ENCODE measurements at regions of chr3 and their contacts with region 1.

Region 1: GRCh38 chr3:197749601-197750395 is at the start of gene FYTTD1:
- DNase-seq: peak; percentile 85
- H3K4me3 Mint-ChIP-seq: peak within 1 kb of the TSS; percentile 97
- H3K27ac Mint-ChIP-seq: peak within 1 kb of the TSS; percentile 95
- H3K4me1 Mint-ChIP-seq: peaks cover 44% of the 10 kb centered on the region
- H3K27me3 Mint-ChIP-seq: peaks cover 13% of the 10 kb centered on the region
- total RNA-seq, gene FYTTD1: 59.0 and 77.2 TPM in 2 replicates

Region 2: GRCh38 chr3:197711973-197712707 is 37.7 kb before region 1 on chr3:
- intact Hi-C with region 1: loop called (anchors 1 kb)
- DNase-seq: peak; percentile 78
- H3K4me3 Mint-ChIP-seq: peak overlapping the region; percentile 70
- H3K27ac Mint-ChIP-seq: peak overlapping the region; percentile 92
- H3K4me1 Mint-ChIP-seq: peaks cover 32% of the 10 kb centered on the region
- H3K27me3 Mint-ChIP-seq: no peaks in the 10 kb centered on the region

Region 3: GRCh38 chr3:197722734-197723133 is 27.1 kb before region 1 on chr3:
- intact Hi-C with region 1: no loop called
- DNase-seq: no peak
- H3K4me3 Mint-ChIP-seq: no peak overlapping the region
- H3K27ac Mint-ChIP-seq: no peak overlapping the region
- H3K4me1 Mint-ChIP-seq: no peaks in the 10 kb centered on the region
- H3K27me3 Mint-ChIP-seq: no peaks in the 10 kb centered on the region

Region 4: GRCh38 chr3:197801891-197802778 is 52.3 kb after region 1 on chr3:
- intact Hi-C with region 1: loop called (anchors 1 kb)
- DNase-seq: no peak
- H3K4me3 Mint-ChIP-seq: no peak overlapping the region
- H3K27ac Mint-ChIP-seq: peak overlapping the region; percentile 42
- H3K4me1 Mint-ChIP-seq: peaks cover 39% of the 10 kb centered on the region
- H3K27me3 Mint-ChIP-seq: no peaks in the 10 kb centered on the region

Region 5: DNA sequence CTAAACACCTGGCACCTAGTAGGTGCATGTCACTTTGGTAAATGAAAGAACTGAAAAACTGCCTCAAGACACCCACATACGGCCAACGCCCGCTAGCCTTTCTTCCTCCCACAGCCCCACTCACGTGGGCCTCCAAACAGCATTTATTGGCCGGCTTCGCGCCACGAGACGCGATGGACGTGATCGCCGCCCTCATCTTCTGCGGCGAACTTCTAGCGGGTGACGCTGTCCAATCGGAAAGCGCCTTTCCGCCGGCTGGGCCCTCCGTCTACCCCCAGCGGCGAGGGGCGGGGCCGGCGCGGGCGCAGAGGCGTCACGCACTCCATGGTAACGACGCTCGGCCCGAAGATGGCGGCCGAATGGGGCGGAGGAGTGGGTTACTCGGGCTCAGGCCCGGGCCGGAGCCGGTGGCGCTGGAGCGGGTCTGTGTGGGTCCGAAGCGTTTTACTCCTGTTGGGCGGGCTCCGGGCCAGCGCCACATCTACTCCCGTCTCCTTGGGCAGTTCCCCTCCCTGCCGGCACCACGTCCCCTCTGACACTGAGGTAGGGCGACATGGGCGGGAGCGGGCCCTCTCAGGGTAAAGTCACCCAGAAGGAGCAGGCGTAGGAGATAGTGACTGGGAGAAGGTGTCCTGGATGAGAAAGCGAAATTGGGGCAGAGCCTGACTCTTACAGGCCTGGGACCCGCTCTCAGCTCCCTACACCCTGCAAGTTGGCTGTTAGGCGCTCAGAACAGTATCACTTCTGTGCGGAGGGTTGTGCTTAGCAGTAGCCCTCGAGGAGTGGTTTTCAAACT is 210.3 kb after region 1 on chr3 and contains the start of gene LMLN:
- intact Hi-C with region 1: loop called (anchors 5 kb)
- DNase-seq: peak; percentile 94
- H3K4me3 Mint-ChIP-seq: peak within 1 kb of the TSS; percentile 86
- H3K27ac Mint-ChIP-seq: peak within 1 kb of the TSS; percentile 93
- H3K4me1 Mint-ChIP-seq: peaks cover 51% of the 10 kb centered on the region
- H3K27me3 Mint-ChIP-seq: no peaks in the 10 kb centered on the region
- total RNA-seq, gene LMLN: 2.8 and 3.7 TPM in 2 replicates